ENCODE measurements at regions of chr10 and their contacts with region 1.

Region 1: GRCh38 chr10:109883859-109884771 is 39.2 kb downstream of the XPNPEP1 start:
- DNase-seq: peak; percentile 54
- H3K4me3 ChIP-seq: no peak overlapping the region
- CTCF ChIP-seq: peak; percentile 80

Region 2: GRCh38 chr10:109701633-109702215 is 182.4 kb before region 1 on chr10:
- CTCF ChIA-PET with region 1: no interaction called
- POLR2A ChIA-PET with region 1: no interaction called
- DNase-seq: no peak
- H3K4me3 ChIP-seq: no peak overlapping the region
- CTCF ChIP-seq: no peak

Region 3: DNA sequence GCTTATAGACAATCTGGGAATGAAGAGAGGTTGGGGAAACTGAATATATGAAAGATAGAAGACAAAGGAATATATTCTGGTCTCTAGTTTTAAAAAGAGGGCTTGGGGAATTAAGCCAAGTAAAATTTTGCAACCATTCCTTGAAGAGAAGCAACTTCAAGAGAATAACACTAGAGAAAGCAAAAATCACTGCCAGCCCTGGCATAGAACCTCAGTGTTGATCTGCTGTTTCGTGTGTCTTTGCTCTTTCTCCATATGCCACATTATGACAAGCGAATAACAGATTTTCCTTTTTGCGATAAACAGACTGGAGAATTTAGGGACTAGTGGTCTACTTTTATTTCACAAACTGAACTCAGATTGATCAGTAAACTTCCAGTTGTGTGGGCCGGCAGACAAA is 93.5 kb before region 1 on chr10:
- CTCF ChIA-PET with region 1: no interaction called
- POLR2A ChIA-PET with region 1: no interaction called
- DNase-seq: no peak
- H3K4me3 ChIP-seq: no peak overlapping the region
- CTCF ChIP-seq: no peak

Region 4: GRCh38 chr10:109902934-109903589 is 18.9 kb after region 1 on chr10:
- CTCF ChIA-PET with region 1: interaction called, 74 read pairs
- POLR2A ChIA-PET with region 1: no interaction called
- DNase-seq: no peak
- H3K4me3 ChIP-seq: no peak overlapping the region
- CTCF ChIP-seq: no peak

Region 5: DNA sequence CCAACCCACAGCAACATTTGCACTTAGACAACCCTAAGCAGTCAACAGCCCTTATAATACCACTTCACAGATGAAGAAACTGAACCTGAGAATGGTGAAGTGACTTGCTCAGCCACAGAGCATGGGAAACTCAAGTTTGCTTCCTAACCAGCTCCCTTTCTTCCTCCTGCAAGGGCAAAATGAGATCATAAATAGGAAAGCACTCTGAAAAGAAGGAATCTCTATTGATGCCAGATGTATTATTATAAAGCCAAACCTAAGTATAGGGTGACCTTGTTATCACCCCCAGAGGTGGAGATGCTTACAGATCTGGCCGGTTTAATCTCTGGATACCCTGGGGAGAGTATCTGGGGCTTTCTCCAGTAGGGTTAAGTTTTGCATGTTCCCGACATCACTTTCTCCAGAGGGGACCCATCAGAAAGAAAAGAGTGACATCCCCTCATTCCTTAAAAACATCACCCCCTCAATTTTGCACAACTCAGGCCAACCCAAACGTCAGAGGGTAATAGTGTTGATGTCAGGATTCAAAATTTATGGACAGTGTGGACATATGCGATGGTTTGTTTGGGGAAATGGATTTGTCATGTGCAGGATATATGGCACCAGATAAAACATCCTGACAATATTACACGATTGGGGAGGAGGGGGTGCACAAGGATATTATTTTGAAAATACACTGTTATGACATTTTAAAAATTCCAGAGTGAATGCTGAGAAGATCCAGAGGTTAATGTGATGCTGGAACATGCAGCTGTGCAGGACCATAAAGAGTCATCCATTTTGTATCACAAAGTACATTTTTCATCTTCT is 63.2 kb after region 1 on chr10:
- CTCF ChIA-PET with region 1: no interaction called
- POLR2A ChIA-PET with region 1: no interaction called
- DNase-seq: no peak
- H3K4me3 ChIP-seq: no peak overlapping the region
- CTCF ChIP-seq: no peak

Region 6: DNA sequence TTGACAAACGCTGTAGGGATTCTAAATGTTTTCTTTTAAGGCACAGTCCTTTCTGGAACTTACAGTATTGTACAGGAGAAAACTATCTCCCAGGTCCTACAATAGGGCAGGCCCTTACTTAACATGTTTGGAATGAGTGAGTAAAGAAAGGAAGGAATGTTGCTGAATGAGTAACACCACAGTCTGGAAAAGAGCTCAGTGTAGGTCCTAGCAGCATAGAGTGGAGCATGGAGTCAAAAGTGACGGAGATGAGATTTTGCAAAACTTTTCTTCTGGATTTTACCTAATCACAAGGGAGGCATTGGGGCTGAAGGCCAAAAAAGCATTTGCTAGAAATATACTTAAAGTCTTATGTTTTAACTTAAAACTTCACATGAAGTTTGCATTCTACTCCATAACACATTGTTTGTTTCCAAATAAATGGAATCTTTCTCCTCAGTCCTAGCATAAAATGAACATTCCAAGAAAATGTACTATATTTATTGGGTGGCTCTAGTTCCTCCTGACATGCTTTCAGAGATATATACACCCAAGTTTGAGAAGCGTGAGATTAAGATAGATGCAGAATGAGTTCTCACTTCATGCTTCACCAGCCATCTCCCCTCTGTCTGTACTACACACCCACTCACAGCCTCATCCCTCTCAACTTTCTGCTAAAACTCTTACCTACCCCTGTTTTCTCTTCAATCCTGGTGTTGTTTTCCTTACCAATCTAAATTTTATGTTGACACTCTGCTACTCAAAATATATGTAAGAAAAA is 103.5 kb after region 1 on chr10:
- CTCF ChIA-PET with region 1: interaction called, 10 read pairs
- POLR2A ChIA-PET with region 1: no interaction called
- DNase-seq: peak; percentile 65
- H3K4me3 ChIP-seq: no peak overlapping the region
- CTCF ChIP-seq: no peak

Region 7: DNA sequence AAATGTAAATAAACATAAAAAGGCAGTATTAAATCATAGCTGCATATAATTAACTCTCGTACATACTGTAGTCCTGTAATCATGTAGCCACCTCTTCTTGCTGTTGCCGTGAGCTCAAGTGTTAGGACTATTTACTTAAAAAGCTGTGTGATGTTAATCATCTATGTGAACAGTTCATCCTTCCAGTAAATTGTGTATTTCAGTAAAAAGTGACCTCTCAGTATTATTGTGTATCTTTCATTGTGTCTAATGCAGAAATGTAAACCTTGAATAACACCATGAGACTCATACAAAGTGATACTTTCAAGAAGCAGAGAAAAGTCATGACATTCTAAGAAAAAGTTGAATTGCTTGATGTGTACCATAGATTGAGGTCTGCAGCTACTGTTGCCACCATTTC is 161.7 kb after region 1 on chr10:
- CTCF ChIA-PET with region 1: interaction called, 18 read pairs
- POLR2A ChIA-PET with region 1: no interaction called
- DNase-seq: no peak
- H3K4me3 ChIP-seq: no peak overlapping the region
- CTCF ChIP-seq: no peak

Region 8: GRCh38 chr10:110093722-110094121 is 209.6 kb after region 1 on chr10:
- CTCF ChIA-PET with region 1: interaction called, 28 read pairs
- POLR2A ChIA-PET with region 1: no interaction called
- DNase-seq: no peak
- H3K4me3 ChIP-seq: no peak overlapping the region
- CTCF ChIP-seq: no peak

Region 9: DNA sequence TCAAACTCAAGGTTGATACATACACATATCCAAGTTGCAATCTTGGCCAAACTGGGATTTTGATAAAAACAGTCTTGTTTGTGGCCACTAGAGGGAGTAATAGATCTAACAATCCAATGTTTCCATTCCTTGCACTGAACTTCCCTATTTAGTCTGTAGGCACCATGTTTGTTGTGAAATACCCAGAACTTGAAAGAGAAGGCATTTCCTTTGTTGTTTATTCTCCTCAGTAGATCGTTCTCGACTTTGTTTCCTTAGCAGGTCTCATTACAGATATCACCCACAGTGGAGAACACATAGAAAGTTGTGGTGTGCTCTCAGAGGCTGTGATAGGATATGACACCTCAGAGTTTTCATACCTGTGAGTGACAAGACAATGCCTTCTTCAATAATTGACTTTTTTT is 253.0 kb after region 1 on chr10:
- CTCF ChIA-PET with region 1: interaction called, 49 read pairs
- POLR2A ChIA-PET with region 1: no interaction called
- DNase-seq: peak; percentile 38
- H3K4me3 ChIP-seq: no peak overlapping the region
- CTCF ChIP-seq: peak; percentile 51

Region 10: GRCh38 chr10:110285501-110285900 is 401.4 kb after region 1 on chr10:
- CTCF ChIA-PET with region 1: interaction called, 54 read pairs
- POLR2A ChIA-PET with region 1: interaction called, 3 read pairs
- DNase-seq: no peak
- H3K4me3 ChIP-seq: no peak overlapping the region
- CTCF ChIP-seq: no peak

Region 11: DNA sequence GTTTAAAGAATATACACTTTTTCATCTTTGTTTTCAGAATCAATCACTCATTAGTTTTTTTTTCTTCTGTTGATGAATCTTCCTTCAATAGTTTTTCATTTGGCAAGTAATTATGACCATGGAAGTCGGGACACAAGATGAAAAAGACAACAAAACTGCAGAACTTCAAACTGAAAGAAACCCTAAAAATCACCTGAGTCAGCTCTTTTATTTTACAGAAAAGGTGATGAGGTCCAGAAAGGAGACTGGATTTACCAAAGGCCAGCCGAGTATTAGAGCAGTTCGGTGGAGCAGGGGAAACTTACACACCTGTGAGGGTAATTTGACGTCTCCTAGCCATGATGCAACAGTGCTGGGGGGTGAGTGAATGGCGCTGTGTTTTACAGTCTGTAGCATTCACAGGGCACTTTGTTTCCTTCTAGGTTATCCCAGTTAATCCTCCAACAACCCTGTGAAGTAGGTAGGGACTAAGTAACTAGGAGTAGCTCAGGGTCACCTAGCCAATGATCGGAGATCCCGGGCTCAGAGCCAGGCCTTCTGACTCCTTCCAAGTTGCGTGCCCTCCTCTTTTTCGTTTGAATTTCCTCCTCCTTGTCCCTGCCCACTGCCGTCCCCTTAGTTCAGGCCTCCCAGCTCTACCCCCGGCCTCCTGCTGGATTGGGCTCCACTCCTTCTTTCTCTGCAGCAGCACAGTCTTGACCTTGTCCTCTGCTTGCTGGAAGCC is 774.0 kb after region 1 on chr10:
- CTCF ChIA-PET with region 1: no interaction called
- POLR2A ChIA-PET with region 1: no interaction called
- DNase-seq: no peak
- H3K4me3 ChIP-seq: no peak overlapping the region
- CTCF ChIP-seq: no peak

Measured in AG04449 (cell line).